ENCODE measurements at regions of chr1 and their contacts with region 1.

Region 1: GRCh38 chr1:43238085-43238484 is 31.7 kb upstream of the TMEM125 start:
- DNase-seq: peak in 4 of 9 donors; percentile 2 to 34 (median 18)
- ATAC-seq: no peak
- H3K4me3 ChIP-seq: no peak overlapping the region
- H3K4me3 Mint-ChIP-seq: no peak overlapping the region
- H3K27ac ChIP-seq: no peak overlapping the region
- H3K27ac Mint-ChIP-seq: peak overlapping the region in 1 of 9 donors; percentile 30
- H3K4me1 ChIP-seq: no peaks in the 10 kb centered on the region
- H3K4me1 Mint-ChIP-seq: peaks cover 0 to 14% (median 0%) of the 10 kb centered on the region in 7 donors
- H3K27me3 ChIP-seq: no peaks in the 10 kb centered on the region
- H3K27me3 Mint-ChIP-seq: peaks cover 0 to 5% (median 5%) of the 10 kb centered on the region in 5 donors

Region 2: GRCh38 chr1:43414634-43415223 is 176.6 kb after region 1 on chr1:
- CTCF ChIA-PET with region 1: interaction called, 8 read pairs
- POLR2A ChIA-PET with region 1: no interaction called
- intact Hi-C with region 1: loop called in 1 of 2 experiments (anchors 1 kb)
- DNase-seq: peak; percentile 31 to 80 (median 71)
- ATAC-seq: peak; percentile 95
- H3K4me3 ChIP-seq: no peak overlapping the region
- H3K4me3 Mint-ChIP-seq: no peak overlapping the region
- H3K27ac ChIP-seq: no peak overlapping the region
- H3K27ac Mint-ChIP-seq: peak overlapping the region in 5 of 9 donors; percentile 6 to 38 (median 24)
- H3K4me1 ChIP-seq: no peaks in the 10 kb centered on the region
- H3K4me1 Mint-ChIP-seq: peaks cover 0 to 10% (median 3%) of the 10 kb centered on the region in 7 donors
- H3K27me3 ChIP-seq: no peaks in the 10 kb centered on the region
- H3K27me3 Mint-ChIP-seq: no peaks in the 10 kb centered on the region

Region 3: DNA sequence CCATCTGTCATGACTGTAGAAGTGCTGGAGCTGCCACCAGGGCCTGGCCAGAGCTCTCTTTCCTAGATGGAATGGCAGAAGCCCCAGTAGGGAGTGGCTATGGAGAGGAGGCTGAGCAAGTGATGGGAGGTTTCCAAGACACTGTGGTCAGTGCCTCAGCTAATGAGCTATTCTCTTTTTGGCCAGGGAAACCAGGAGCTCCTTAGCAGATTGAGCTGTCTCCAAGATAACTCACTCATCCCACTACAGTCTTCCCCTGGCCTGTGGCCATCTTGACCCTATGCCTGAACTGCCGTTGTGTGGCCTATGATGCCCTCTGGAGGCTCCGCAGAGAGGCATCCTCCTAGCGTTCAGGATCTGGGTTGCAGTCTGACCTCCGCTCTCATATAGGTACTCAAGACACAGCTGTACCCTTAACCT is 1056.5 kb after region 1 on chr1:
- CTCF ChIA-PET with region 1: no interaction called
- POLR2A ChIA-PET with region 1: no interaction called
- intact Hi-C with region 1: no loop called
- DNase-seq: no peak
- ATAC-seq: no peak
- H3K4me3 ChIP-seq: no peak overlapping the region
- H3K4me3 Mint-ChIP-seq: no peak overlapping the region
- H3K27ac ChIP-seq: no peak overlapping the region
- H3K27ac Mint-ChIP-seq: no peak overlapping the region
- H3K4me1 ChIP-seq: no peaks in the 10 kb centered on the region
- H3K4me1 Mint-ChIP-seq: peaks cover 0 to 4% (median 0%) of the 10 kb centered on the region in 7 donors
- H3K27me3 ChIP-seq: no peaks in the 10 kb centered on the region
- H3K27me3 Mint-ChIP-seq: no peaks in the 10 kb centered on the region